Mammary epithelial cell (primary cell): ENCODE measurements at regions of chr20 and their contacts with region 1.

Region 1: DNA sequence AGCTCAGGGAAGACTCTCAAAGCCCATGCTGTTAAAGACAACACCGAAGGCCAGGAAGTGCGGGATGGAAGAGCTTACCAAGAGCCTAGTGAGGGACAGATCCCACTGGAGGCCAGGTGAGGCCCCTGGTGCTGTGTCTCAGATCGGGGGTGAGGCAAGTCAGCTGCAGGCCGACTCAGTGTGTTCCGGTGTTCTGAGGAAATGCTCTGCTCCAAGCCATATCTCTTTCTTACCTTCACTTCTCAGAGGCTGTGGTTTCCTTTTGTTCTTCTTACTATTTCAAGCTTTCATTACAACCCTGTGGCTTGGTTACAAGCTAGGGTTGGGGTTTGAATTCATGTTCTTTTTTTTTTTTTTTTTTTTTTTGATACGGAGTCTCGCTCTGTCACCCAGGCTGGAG is 114.3 kb upstream of the ZFP64 start:
- DNase-seq: no peak
- H3K4me3 ChIP-seq: no peak overlapping the region
- H3K27ac ChIP-seq: no peak overlapping the region
- H3K4me1 ChIP-seq: no peaks in the 10 kb centered on the region
- H3K27me3 ChIP-seq: no peaks in the 10 kb centered on the region
- CTCF ChIP-seq: no peak

Region 2: GRCh38 chr20:52270001-52270606 is 35.8 kb before region 1 on chr20:
- CTCF ChIA-PET with region 1: no interaction called
- dilution Hi-C with region 1: loop called (anchors 5 kb)
- in situ Hi-C with region 1: no loop called
- intact Hi-C with region 1: no loop called
- DNase-seq: no peak
- H3K4me3 ChIP-seq: no peak overlapping the region
- H3K27ac ChIP-seq: no peak overlapping the region
- H3K4me1 ChIP-seq: no peaks in the 10 kb centered on the region
- H3K27me3 ChIP-seq: no peaks in the 10 kb centered on the region
- CTCF ChIP-seq: no peak